Dorsolateral prefrontal cortex (tissue), 120 donors: ENCODE measurements at regions of chr14 and their contacts with region 1.

Region 1: DNA sequence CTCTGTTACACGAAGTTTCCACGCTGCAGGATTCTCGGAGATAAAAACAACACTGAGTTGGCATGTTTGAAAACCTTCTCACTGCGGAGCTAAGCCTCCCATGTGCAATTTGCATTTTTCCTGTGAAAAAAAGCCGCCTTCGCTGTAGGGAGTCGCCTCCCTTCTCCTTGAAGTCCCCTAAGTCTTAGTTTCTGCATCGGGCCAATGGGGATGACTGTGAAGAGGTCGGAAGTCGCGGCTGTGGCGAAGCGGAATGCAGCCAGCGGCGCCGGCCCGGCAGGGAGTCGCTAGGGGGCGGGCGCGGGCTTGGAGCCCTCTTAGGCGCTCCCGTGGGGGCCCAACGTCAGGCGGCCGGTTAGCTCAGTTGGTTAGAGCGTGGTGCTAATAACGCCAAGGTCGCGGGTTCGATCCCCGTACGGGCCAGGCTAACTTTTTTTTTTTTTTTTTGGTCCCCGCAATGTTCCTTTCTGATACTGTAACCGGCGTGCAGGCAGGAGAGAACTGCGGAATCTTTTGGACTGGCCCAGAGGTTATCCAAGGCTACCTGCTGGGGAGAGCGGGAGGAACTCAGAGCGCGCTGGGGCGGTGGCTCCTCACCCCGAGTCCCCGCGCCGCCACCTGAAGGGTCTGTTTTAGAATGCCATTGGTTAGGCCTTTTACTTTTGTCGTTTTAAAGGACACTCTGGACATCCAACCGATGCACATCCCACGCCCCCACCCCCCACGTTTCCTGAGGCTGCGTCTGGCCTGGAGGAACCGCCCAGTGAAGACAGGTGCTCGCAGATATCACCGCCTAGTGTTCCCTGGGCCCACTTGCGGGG is 2.6 kb upstream of the ZNF839 start:
- DNase-seq: peak; percentile 89 to 97 (median 96)
- H3K4me3 ChIP-seq: peak overlapping the region; percentile 42 to 81 (median 61)
- H3K27ac ChIP-seq: peak overlapping the region; percentile 66 to 100 (median 99)
- H3K27me3 ChIP-seq: no peaks in the 10 kb centered on the region
- CTCF ChIP-seq: peak; percentile 52 to 96 (median 87)

Region 2: DNA sequence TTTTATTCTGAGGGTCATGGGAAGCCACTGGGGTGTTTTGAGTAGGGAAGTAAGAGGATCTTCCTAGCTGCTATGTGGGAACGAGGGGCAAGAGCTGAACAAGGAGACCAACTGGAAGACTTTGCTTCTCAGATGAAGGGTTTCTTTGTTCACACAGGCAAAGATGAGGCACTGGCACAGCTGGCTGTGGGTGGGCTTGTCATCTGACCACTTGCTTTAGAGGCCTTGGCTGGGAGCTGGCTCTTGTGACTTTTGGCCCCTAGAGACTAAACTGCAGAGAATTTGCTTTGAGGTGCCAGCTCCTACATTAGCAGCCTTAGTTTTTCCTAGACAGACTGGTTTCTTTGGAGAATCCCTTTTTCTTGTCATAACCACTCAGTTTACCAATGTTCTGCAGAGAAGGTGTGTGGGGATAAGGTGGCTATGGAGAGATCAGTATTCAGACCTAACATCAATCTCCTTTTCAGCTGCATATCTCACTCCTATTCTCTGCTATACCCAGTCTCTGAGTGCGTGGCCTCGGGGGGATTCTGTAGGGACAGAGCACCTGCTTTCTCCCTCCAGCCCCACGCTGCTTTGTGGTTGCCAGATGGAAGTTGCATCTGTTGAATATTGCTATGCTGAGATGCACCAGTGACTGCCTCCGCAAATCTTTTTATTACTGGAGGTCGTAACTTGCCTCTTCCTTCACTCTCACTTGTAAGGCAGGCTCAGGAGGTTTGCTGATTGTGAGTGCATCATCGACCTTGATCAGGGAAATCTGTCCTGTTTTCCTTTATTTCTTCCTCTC is 542.8 kb before region 1 on chr14:
- intact Hi-C with region 1: loop called in 1 of 2 experiments (anchors 10 kb)
- DNase-seq: peak in 6 of 10 donors; percentile 39 to 73 (median 64)
- H3K4me3 ChIP-seq: peak overlapping the region in 5 of 59 donors; percentile 1 to 17 (median 11)
- H3K27ac ChIP-seq: peak overlapping the region; percentile 27 to 90 (median 79)
- H3K27me3 ChIP-seq: no peaks in the 10 kb centered on the region
- CTCF ChIP-seq: no peak

Region 3: DNA sequence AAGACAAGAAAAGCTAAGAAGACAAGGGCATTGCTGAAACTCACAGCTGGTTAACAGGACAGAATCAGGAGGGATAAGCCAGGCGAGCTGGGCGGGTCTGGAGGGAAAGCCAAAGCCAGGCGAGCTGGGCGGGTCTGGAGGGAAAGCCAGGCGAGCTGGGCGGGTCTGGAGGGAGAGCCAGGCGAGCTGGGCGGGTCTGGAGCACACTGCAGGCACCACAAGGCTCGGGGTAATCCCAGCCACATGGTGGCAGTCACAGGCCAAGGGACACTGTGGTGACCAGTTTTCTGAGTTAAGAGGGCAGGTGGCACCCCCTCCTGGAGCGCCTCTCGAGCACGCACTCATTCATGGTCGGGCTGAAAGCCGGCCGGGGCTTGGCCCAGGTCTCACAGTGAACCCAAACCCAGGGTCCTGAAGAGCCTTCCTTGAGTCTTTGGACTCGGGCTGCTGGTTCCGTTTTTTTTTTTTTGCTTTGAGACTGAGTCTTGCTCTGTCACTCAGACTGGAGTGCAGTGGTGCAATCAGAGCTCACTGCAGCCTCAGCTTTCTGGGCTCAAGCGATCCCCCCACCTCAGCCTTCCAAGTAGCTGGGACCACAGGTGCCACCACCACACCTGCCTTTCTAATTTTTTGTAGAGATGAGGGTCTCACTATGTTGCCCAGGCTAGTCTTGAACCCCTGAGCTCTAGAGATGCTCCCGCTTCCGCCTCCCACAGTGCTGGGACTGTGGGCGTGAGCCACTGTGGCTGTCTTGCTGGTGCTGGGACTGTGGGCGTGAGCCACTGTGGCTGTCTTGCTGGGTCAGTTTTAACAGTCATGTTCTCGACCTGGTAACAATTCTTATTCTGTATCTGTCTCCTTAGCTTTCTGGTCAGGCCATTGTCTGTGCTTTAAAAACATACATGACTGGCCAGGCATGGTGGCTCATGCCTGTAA is 270.3 kb before region 1 on chr14:
- intact Hi-C with region 1: loop called (anchors 2 to 10 kb)
- DNase-seq: peak; percentile 71 to 81 (median 76)
- H3K4me3 ChIP-seq: no peak overlapping the region
- H3K27ac ChIP-seq: peak overlapping the region in 50 of 59 donors; percentile 5 to 77 (median 56)
- H3K27me3 ChIP-seq: no peaks in the 10 kb centered on the region
- CTCF ChIP-seq: peak in 54 of 56 donors; percentile 21 to 79 (median 62)

Region 4: DNA sequence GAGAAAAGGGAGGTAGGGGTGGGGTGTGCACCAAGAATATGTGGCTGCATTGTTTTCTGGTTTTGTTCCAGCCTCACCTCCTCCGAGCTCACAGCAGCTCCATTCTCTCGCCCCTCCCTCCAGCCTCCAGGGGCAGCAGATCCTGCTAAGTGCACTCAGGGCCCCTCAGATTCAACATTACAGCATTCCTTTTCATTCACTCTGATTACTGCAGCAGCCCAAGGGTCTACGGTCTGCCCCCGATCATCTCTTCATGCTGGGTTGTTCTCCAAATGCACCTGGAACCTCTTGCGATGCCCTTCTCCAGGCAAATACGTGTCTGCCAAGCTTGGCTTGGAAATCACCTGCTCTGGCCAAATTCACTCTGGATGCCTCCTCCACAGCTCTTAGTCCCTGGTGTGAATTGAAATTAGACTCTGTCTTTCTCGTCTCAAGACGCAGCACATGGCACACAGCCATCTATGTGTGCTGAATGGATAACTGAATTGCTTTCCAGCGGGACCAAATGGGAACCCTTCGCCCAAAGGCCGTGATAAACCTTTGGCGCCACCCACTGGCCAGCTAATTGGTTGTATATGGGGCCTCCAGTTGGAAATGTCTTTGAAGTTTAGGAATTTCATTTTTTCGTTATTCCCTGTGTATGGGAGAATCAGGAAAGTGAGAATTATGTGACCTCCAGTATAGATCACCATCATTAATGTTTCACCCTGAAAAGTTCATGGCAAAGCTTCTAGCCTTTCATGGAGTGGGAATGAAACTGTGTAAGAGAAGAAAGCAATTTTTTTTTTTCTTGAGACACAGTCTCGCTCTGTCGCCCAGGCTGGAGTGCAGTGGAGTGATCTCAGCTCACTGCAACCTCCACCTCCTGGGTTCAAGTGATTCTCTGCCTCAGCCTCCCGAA is 220.5 kb before region 1 on chr14:
- intact Hi-C with region 1: loop called in 1 of 2 experiments (anchors 2 kb)
- DNase-seq: peak; percentile 81 to 94 (median 90)
- H3K4me3 ChIP-seq: peak overlapping the region in 25 of 59 donors; percentile 5 to 50 (median 29)
- H3K27ac ChIP-seq: peak overlapping the region in 54 of 59 donors; percentile 2 to 87 (median 69)
- H3K27me3 ChIP-seq: no peaks in the 10 kb centered on the region
- CTCF ChIP-seq: peak; percentile 71 to 93 (median 84)

Region 5: GRCh38 chr14:102235275-102235897 is 81.6 kb before region 1 on chr14:
- intact Hi-C with region 1: loop called (anchors 2 to 5 kb)
- DNase-seq: peak in 9 of 10 donors; percentile 45 to 74 (median 62)
- H3K4me3 ChIP-seq: peak overlapping the region in 10 of 59 donors; percentile 2 to 30 (median 16)
- H3K27ac ChIP-seq: peak overlapping the region in 8 of 59 donors; percentile 18 to 57 (median 28)
- H3K27me3 ChIP-seq: no peaks in the 10 kb centered on the region
- CTCF ChIP-seq: peak; percentile 32 to 84 (median 74)

Region 6: DNA sequence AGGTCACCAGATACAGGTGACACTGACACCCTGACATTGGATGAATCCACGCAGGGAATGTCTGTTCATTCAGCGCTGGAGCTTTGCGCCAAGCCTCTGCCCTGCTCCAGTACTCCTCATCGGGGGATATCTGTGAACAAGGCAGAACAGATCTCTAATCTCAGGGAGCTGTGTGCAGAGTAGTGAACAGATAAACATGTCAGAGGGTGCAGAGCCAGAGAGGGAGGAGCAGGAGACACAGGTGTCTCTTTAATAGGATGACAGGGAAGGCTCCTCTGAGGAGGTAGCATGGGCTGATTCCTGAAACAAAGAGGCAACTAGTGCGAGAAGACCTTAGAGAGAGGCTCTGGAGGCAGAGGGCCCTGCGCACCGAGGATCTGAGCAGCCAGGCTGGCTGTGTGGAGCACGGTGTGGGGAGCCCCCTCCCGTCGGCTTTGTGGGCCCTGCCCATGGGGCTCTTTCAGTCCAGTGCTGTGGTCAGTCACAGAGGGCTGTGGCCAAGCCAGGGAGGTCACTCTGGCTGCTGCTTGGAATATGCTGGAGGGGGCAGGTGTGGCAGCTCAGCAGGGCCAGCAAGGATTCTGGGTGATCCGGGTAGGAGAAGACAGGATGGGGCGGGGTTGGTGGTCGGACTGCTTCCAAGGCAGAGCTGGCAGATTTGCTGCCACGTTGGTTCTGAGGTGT is 101.4 kb after region 1 on chr14:
- intact Hi-C with region 1: loop called in 1 of 2 experiments (anchors 5 kb)
- DNase-seq: peak in 8 of 10 donors; percentile 39 to 72 (median 58)
- H3K4me3 ChIP-seq: peak overlapping the region in 1 of 59 donors; percentile 18
- H3K27ac ChIP-seq: peak overlapping the region; percentile 60 to 100 (median 96)
- H3K27me3 ChIP-seq: no peaks in the 10 kb centered on the region
- CTCF ChIP-seq: peak in 17 of 56 donors; percentile 7 to 48 (median 22)